Psoas muscle (tissue), 8 donors: ENCODE measurements at regions of chr1 and their contacts with region 1.

Region 1: DNA sequence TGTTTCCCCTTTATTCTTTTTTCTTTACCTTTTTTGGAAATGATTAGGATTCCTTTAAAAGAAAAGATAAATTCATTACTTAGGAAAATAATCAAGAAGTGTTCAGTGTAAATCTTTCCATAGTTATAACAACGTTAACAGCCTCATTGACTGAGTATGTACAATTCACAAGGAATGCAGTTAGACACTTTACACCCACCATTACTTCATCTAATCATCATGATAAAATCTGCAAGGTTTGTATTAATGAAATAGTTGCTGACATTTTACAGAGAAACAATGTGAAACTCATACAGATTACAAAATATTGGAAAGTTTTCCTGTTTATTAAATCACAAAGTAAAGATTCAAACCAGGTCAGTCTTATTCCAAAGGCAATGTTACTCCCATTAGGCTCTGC is 59.3 kb upstream of the NEGR1 start:
- DNase-seq: no peak
- ATAC-seq: no peak
- H3K4me3 ChIP-seq: no peak overlapping the region
- H3K27ac ChIP-seq: no peak overlapping the region
- H3K4me1 ChIP-seq: no peaks in the 10 kb centered on the region
- H3K27me3 ChIP-seq: no peaks in the 10 kb centered on the region
- CTCF ChIP-seq: no peak

Region 2: GRCh38 chr1:72296481-72296880 is 45.2 kb before region 1 on chr1:
- intact Hi-C with region 1: loop called in 1 of 2 experiments (anchors 1 kb)
- DNase-seq: no peak
- ATAC-seq: no peak
- H3K4me3 ChIP-seq: no peak overlapping the region
- H3K27ac ChIP-seq: no peak overlapping the region
- H3K4me1 ChIP-seq: no peaks in the 10 kb centered on the region
- H3K27me3 ChIP-seq: no peaks in the 10 kb centered on the region
- CTCF ChIP-seq: no peak